Activated CD4-positive, alpha-beta T cell treated with anti-CD3 and anti-CD28 coated beads for 36 hours (primary cell): ENCODE measurements at regions of chr5 and their contacts with region 1.

Region 1: GRCh38 chr5:55072666-55073065 is 29.8 kb upstream of the GZMA start:
- DNase-seq: no peak
- ATAC-seq: peak; percentile 83
- H3K4me3 Mint-ChIP-seq: peak overlapping the region; percentile 23
- H3K27ac Mint-ChIP-seq: peak overlapping the region; percentile 52
- H3K4me1 Mint-ChIP-seq: peaks cover 33% of the 10 kb centered on the region
- H3K27me3 Mint-ChIP-seq: peaks cover 2% of the 10 kb centered on the region

Region 2: DNA sequence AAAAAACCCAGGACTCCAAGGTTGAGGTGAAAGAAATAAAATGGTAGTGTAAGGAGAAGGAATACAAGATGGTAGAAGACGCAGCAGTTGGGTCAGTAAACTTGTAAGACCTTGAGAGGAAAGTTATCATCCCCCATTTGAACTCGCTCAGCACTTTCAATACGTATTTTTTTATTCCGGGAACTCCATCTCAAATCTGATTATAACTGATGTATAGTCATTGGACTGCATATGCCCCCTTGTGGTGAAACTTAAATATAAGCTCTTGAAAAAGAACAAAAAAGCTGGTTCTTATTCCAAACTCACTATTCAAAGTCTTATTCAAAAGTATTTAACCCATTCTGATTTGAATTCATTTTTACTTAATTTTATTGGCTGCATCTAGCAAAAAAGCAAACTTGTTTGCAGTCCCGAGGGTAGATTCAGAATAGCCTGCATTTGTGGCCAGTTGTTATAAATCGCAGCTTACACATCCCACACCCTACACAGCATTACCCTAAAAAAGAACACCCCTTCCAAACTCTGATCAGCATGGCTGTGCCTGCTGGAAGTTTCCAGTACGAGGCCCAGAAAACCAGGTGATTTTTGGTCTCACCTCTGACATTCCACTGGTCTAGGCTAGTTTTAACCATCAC is 205.2 kb before region 1 on chr5:
- CTCF ChIA-PET with region 1: interaction called, 3 read pairs
- POLR2A ChIA-PET with region 1: no interaction called
- intact Hi-C with region 1: loop called in 1 of 2 experiments (anchors 1 kb)
- DNase-seq: no peak
- ATAC-seq: no peak
- H3K4me3 Mint-ChIP-seq: no peak overlapping the region
- H3K27ac Mint-ChIP-seq: no peak overlapping the region
- H3K4me1 Mint-ChIP-seq: peaks cover 29% of the 10 kb centered on the region
- H3K27me3 Mint-ChIP-seq: peaks cover 34% of the 10 kb centered on the region

Region 3: GRCh38 chr5:55021410-55021809 is 51.3 kb before region 1 on chr5:
- CTCF ChIA-PET with region 1: interaction called, 3 read pairs
- POLR2A ChIA-PET with region 1: no interaction called
- intact Hi-C with region 1: loop called in 1 of 2 experiments (anchors 2 kb)
- DNase-seq: no peak
- ATAC-seq: no peak
- H3K4me3 Mint-ChIP-seq: no peak overlapping the region
- H3K27ac Mint-ChIP-seq: no peak overlapping the region
- H3K4me1 Mint-ChIP-seq: peaks cover 36% of the 10 kb centered on the region
- H3K27me3 Mint-ChIP-seq: no peaks in the 10 kb centered on the region

Region 4: GRCh38 chr5:55037046-55037771 is 35.5 kb before region 1 on chr5:
- CTCF ChIA-PET with region 1: no interaction called
- POLR2A ChIA-PET with region 1: no interaction called
- intact Hi-C with region 1: loop called (anchors 1 kb)
- DNase-seq: peak; percentile 87
- ATAC-seq: peak; percentile 95
- H3K4me3 Mint-ChIP-seq: peak overlapping the region; percentile 16
- H3K27ac Mint-ChIP-seq: peak overlapping the region; percentile 82
- H3K4me1 Mint-ChIP-seq: peaks cover 28% of the 10 kb centered on the region
- H3K27me3 Mint-ChIP-seq: no peaks in the 10 kb centered on the region

Region 5: GRCh38 chr5:55062039-55062779 is 10.5 kb before region 1 on chr5:
- CTCF ChIA-PET with region 1: interaction called, 22 read pairs
- POLR2A ChIA-PET with region 1: no interaction called
- intact Hi-C with region 1: loop called in 1 of 2 experiments (anchors 1 kb)
- DNase-seq: peak; percentile 81
- ATAC-seq: peak; percentile 83
- H3K4me3 Mint-ChIP-seq: peak overlapping the region; percentile 52
- H3K27ac Mint-ChIP-seq: peak overlapping the region; percentile 80
- H3K4me1 Mint-ChIP-seq: peaks cover 48% of the 10 kb centered on the region
- H3K27me3 Mint-ChIP-seq: peaks cover 4% of the 10 kb centered on the region

Region 6: GRCh38 chr5:55102348-55102747 is 29.7 kb after region 1 on chr5 and contains the start of gene GZMA:
- CTCF ChIA-PET with region 1: interaction called, 3 read pairs
- POLR2A ChIA-PET with region 1: no interaction called
- intact Hi-C with region 1: loop called (anchors 1 kb)
- DNase-seq: peak; percentile 39
- ATAC-seq: peak; percentile 84
- H3K4me3 Mint-ChIP-seq: peak within 1 kb of the TSS; percentile 50
- H3K27ac Mint-ChIP-seq: peak within 1 kb of the TSS; percentile 74
- H3K4me1 Mint-ChIP-seq: peaks cover 65% of the 10 kb centered on the region
- H3K27me3 Mint-ChIP-seq: peaks cover 19% of the 10 kb centered on the region
- total RNA-seq, gene GZMA: 2.4 TPM

Region 7: DNA sequence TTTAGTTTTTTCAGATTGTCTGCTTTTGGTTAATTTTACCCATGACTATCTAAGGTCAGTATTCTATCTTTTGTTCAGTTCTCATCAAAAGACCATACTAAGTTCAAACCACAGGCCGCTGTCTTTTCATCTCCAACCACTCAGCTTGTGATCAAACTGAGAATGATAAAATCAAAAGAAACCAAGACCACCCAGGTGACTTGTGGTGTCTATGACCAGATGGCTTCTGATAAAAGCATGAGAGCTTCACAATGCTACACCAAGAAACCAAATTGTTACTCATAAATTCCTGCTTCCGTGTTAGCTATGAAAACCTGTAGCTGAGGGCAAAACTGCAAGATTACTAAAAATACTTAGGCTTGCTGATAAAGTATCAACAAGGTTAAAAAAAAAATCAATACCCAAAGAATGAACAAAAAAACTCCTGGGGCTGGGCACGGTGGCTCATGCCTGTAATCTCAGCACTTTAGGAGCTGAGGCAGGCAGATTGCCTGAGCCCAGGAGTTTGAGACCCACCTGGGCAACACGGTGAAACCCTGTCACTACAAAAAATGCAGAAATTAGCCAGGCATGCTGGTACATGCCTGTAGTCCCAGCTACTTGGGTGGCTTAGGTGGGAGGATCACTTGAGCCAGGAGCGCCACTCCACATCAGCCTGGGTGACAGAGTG is 61.5 kb after region 1 on chr5:
- CTCF ChIA-PET with region 1: no interaction called
- POLR2A ChIA-PET with region 1: no interaction called
- intact Hi-C with region 1: loop called in 1 of 2 experiments (anchors 5 kb)
- DNase-seq: peak; percentile 15
- ATAC-seq: peak; percentile 60
- H3K4me3 Mint-ChIP-seq: no peak overlapping the region
- H3K27ac Mint-ChIP-seq: no peak overlapping the region
- H3K4me1 Mint-ChIP-seq: peaks cover 14% of the 10 kb centered on the region
- H3K27me3 Mint-ChIP-seq: peaks cover 4% of the 10 kb centered on the region